Dorsolateral prefrontal cortex (tissue), 120 donors: ENCODE measurements at regions of chr9 and their contacts with region 1.

Region 1: GRCh38 chr9:112443200-112443599 is 43.4 kb upstream of the KIAA1958 start:
- DNase-seq: peak in 1 of 10 donors; percentile 31
- H3K4me3 ChIP-seq: no peak overlapping the region
- H3K27ac ChIP-seq: no peak overlapping the region
- H3K27me3 ChIP-seq: no peaks in the 10 kb centered on the region
- CTCF ChIP-seq: peak in 55 of 56 donors; percentile 25 to 79 (median 60)

Region 2: DNA sequence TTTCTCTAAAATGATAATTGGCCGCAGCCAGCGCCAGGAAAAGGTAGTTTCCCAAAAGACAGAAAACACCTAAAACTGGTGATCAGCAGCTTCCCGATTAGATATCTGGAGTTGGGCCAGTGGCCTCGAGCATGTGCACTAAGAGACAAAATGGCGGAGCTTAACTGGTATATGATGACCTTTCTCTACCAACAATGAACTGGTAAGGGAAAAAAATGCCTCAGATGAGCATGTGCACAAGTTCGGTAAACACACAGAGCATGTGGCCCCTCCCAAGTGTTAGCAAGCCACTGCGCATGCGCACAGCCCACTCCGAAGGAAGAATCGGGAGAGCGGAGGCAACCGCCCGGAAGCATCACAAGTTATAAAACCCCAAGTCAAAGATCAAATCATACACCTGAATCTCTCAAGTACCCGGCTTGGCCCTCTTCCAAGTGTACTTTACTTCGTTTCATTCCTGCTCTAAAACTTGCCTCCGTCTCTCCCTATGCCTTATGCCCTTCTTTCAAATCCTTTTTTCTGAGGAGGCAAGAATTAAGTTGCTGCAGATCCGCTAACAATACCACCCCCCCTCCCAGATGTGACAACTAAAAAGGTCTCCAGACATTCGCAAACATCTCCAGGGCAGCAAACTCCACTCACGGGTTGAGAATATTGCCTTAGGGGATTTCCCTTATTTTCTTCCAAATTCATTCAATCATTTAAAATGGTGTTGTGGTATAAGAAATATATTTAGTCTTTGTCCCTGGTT is 94.8 kb before region 1 on chr9:
- intact Hi-C with region 1: no loop called
- DNase-seq: peak; percentile 58 to 86 (median 78)
- H3K4me3 ChIP-seq: peak overlapping the region; percentile 31 to 76 (median 59)
- H3K27ac ChIP-seq: peak overlapping the region in 21 of 59 donors; percentile 7 to 63 (median 41)
- H3K27me3 ChIP-seq: no peaks in the 10 kb centered on the region
- CTCF ChIP-seq: peak in 7 of 56 donors; percentile 14 to 42 (median 23)

Region 3: GRCh38 chr9:112705768-112706427 is 262.7 kb after region 1 on chr9:
- intact Hi-C with region 1: loop called (anchors 10 kb)
- DNase-seq: peak in 4 of 10 donors; percentile 19 to 66 (median 36)
- H3K4me3 ChIP-seq: no peak overlapping the region
- H3K27ac ChIP-seq: peak overlapping the region in 6 of 59 donors; percentile 4 to 50 (median 30)
- H3K27me3 ChIP-seq: no peaks in the 10 kb centered on the region
- CTCF ChIP-seq: peak in 55 of 56 donors; percentile 26 to 75 (median 56)